Prostate gland (tissue), 2 donors: ENCODE measurements at regions of chr18 and their contacts with region 1.

Region 1: GRCh38 chr18:12726774-12727550 is 24.1 kb downstream of the PSMG2 start:
- DNase-seq: peak; percentile 65
- H3K4me3 ChIP-seq: no peak overlapping the region
- H3K27ac ChIP-seq: no peak overlapping the region
- H3K4me1 ChIP-seq: no peaks in the 10 kb centered on the region
- H3K27me3 ChIP-seq: no peaks in the 10 kb centered on the region
- CTCF ChIP-seq: peak; percentile 65 to 91 (median 82)
- POLR2A ChIP-seq: no peak

Region 2: DNA sequence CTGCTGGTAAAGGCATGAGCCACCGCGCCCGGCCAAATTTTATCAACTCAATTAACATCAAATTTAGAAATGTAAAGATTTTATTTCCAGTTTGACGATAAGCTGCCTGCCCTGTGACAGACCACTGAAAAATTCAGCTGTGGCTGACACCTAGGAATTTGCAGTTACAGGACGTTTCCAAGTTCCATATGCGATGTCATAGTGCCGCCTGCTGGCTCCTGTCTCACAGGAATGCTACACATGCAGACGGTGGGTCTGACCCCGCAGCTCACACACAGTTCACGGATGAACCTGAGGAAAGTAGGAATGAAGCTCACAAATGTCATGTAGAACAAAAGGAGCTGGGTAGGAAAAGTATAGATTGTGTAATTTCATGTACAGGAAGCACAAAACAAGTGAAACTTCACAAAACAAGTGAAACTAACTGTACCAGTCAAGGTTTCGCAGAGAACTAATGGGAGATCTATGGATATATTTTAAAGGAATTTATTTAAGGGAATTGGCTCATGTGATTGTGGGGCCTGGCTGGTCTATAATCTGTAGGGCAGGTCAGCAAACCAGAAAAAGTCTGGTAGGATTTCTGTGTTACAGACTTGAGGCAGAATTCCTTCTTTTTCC is 207.6 kb after region 1 on chr18:
- intact Hi-C with region 1: loop called (anchors 1 kb)
- DNase-seq: peak; percentile 67
- H3K4me3 ChIP-seq: no peak overlapping the region
- H3K27ac ChIP-seq: no peak overlapping the region
- H3K4me1 ChIP-seq: no peaks in the 10 kb centered on the region
- H3K27me3 ChIP-seq: no peaks in the 10 kb centered on the region
- CTCF ChIP-seq: peak; percentile 59 to 90 (median 81)
- POLR2A ChIP-seq: no peak